OCI-LY7 (cell line): ENCODE measurements at regions of chr11 and their contacts with region 1.

Region 1: DNA sequence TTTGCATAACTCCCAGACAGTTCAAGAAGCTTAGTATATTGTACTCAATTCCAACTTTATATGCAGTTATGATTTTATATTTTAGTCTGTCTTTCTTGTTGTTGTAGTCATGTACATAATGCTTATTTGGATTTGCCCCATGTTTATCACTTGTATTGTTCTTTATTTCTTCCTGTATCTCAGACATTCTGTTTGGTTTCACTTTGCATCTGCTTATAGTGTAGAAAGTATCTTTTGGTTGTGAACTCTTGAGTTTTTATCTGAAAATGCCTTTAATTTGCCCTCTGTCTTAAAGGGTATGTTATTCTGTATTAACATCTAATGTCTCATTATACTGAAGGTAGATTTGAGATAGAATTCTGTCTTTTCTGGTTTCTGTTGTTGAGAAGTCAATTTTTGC is 275.4 kb downstream of the DYNC2H1 start:
- DNase-seq: no peak
- H3K4me3 ChIP-seq: no peak overlapping the region
- H3K27ac ChIP-seq: no peak overlapping the region
- H3K4me1 ChIP-seq: no peaks in the 10 kb centered on the region
- CTCF ChIP-seq: no peak

Region 2: DNA sequence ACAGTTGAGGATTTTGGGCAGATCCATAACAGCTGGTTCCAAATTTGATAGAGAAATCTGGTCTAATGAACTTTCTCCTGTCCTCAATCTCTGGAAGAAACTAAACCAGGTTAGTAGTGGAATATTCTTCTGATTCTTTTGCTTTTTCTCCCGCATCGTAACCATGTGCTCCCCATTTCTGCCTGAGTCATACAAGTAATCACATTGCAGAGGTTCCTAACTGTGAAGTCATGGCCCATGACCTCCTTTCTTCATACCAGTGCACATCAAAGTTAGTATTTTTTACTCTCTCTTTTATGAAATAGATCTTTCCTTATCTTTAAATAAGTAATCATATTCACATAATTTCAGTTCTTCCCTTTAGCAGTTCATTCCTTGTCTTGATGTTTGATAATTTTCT is 26.4 kb before region 1 on chr11:
- CTCF ChIA-PET with region 1: no interaction called
- POLR2A ChIA-PET with region 1: interaction called, 12 read pairs
- intact Hi-C with region 1: no loop called
- DNase-seq: no peak
- H3K4me3 ChIP-seq: no peak overlapping the region
- H3K27ac ChIP-seq: no peak overlapping the region
- H3K4me1 ChIP-seq: no peaks in the 10 kb centered on the region
- CTCF ChIP-seq: no peak

Region 3: GRCh38 chr11:103395612-103396011 is 11.0 kb after region 1 on chr11:
- CTCF ChIA-PET with region 1: no interaction called
- POLR2A ChIA-PET with region 1: no interaction called
- intact Hi-C with region 1: no loop called
- DNase-seq: no peak
- H3K4me3 ChIP-seq: no peak overlapping the region
- H3K27ac ChIP-seq: no peak overlapping the region
- H3K4me1 ChIP-seq: no peaks in the 10 kb centered on the region
- CTCF ChIP-seq: no peak